ENCODE measurements at regions of chr17 and their contacts with region 1.

Region 1: GRCh38 chr17:79991140-79991923 is 44.3 kb downstream of the TBC1D16 start:
- DNase-seq: peak; percentile 60 to 93
- H3K4me3 ChIP-seq: no peak overlapping the region
- CTCF ChIP-seq: no peak
- POLR2A ChIP-seq: no peak

Region 2: DNA sequence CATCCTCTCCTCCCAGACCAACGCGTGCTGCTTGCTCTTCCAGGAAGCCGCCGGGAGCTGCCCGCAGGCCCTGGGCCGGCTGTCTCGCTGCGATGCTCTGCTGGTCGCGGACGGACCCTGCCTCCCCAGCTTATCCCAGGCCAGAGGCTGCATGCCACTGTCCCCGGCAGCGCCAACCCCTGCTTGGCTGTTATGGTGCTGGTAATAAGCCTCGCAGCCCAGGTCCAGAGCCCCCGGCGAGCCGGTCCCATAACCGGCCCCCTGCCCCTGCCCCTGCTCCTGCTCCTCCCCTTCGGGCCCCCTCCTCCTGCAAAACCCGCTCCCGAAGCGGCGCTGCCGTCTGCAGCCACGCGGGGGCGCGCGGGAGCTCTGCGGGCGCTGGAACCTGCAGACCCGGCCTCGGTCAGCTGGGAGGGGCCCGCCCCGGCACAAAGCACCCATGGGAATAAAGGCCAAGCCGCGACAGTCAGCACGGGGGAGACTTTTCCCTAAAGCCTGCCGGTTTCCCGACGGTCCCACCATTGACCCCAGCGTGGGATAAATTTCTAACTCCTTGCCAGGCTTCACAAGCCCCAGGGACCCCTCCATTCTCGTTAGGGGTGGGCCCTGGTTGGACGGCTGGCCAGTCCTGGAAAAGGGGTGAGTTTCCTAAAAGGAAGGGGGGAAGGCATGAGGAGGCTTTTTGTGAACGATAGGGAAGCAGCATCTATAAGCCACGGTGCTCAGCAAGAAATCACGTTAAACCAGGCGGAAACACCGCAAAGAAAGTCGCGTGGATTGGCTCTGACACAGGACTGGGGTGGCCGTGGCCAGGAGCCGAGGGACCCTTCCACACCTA is 249.4 kb before region 1 on chr17:
- intact Hi-C with region 1: loop called (anchors 5 kb)
- DNase-seq: peak; percentile 42 to 92
- H3K4me3 ChIP-seq: no peak overlapping the region
- CTCF ChIP-seq: peak in 1 of 3 donors; percentile 56
- POLR2A ChIP-seq: no peak

Region 3: DNA sequence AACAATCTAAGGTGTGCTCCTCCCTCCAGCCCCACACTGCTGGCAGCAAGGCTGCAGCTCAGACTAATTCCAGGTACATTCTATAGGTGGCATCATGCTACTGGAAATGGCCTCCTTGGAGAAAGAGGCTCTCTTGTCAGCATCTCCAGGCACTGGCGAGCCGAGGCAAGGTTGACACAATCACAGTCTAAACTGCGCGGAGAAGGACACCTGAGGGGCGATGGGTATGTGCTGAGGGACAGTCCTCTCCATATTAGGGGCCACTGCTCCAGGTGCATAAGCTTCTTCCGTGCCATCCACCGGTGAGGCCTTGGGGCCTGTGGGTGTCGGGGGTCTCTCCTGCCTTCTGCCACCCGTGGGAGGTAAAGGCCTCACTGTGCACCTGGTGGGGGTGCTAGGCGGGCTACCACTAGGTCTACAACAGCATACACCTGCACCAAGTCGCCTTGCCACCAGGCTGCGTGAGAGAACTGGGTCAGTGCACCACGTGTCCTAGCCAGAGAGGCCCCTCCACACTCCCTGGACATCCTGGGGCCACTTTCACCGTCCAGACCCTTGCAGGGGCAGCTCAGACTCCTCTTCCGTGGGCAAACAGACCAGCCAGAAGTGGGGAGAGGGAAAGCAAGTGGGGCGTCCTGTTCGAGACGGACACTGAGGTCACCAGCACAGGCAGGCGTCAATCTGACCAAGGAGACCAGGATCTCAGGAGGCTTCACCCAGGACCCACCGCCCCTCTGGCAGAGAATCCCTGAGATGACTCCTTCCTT is 182.4 kb before region 1 on chr17:
- intact Hi-C with region 1: loop called (anchors 10 kb)
- DNase-seq: peak in 1 of 2 donors; percentile 18
- H3K4me3 ChIP-seq: no peak overlapping the region
- CTCF ChIP-seq: no peak
- POLR2A ChIP-seq: no peak

Region 4: GRCh38 chr17:79951361-79952264 is 39.7 kb before region 1 on chr17:
- intact Hi-C with region 1: loop called (anchors 1 kb)
- DNase-seq: peak in 1 of 2 donors; percentile 86
- H3K4me3 ChIP-seq: no peak overlapping the region
- CTCF ChIP-seq: no peak
- POLR2A ChIP-seq: no peak

Measured in lower leg skin (tissue), 4 donors.